ENCODE measurements at regions of chr14 and their contacts with region 1.

Region 1: DNA sequence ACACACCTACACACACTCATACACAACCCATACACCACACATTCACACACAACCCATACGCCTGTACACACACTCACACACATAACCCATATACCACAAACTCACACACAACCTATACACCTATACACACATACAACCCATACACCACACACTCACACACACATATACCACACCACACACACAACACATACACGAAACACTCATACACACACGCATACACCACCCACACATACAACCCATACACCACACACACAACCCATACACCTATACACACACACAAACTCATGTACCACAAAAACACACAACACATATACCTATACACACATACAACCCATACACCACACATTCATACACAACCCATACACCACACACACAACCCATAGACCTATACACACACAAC is 164.3 kb downstream of the TMEM121 start:
- DNase-seq: no peak
- H3K4me3 ChIP-seq: no peak overlapping the region
- H3K27ac ChIP-seq: peak overlapping the region; percentile 90
- H3K4me1 ChIP-seq: peaks cover 79% of the 10 kb centered on the region
- CTCF ChIP-seq: no peak

Region 2: GRCh38 chr14:105568859-105569708 is 121.6 kb before region 1 on chr14:
- CTCF ChIA-PET with region 1: no interaction called
- POLR2A ChIA-PET with region 1: no interaction called
- intact Hi-C with region 1: loop called (anchors 2 kb)
- DNase-seq: peak; percentile 10
- H3K4me3 ChIP-seq: no peak overlapping the region
- H3K27ac ChIP-seq: peak overlapping the region; percentile 88
- H3K4me1 ChIP-seq: peaks cover 91% of the 10 kb centered on the region
- CTCF ChIP-seq: no peak

Region 3: GRCh38 chr14:105711686-105712477 is 21.2 kb after region 1 on chr14:
- CTCF ChIA-PET with region 1: interaction called, 13 read pairs
- POLR2A ChIA-PET with region 1: no interaction called
- intact Hi-C with region 1: no loop called
- DNase-seq: no peak
- H3K4me3 ChIP-seq: no peak overlapping the region
- H3K27ac ChIP-seq: no peak overlapping the region
- H3K4me1 ChIP-seq: peaks cover 12% of the 10 kb centered on the region
- CTCF ChIP-seq: no peak

Region 4: GRCh38 chr14:106578481-106578880 is 887.8 kb after region 1 on chr14:
- CTCF ChIA-PET with region 1: no interaction called
- POLR2A ChIA-PET with region 1: no interaction called
- intact Hi-C with region 1: no loop called
- DNase-seq: peak; percentile 68
- H3K4me3 ChIP-seq: no peak overlapping the region
- H3K27ac ChIP-seq: no peak overlapping the region
- H3K4me1 ChIP-seq: peaks cover 10% of the 10 kb centered on the region
- CTCF ChIP-seq: no peak

Measured in OCI-LY7 (cell line).